Uterus (tissue), 4 donors: ENCODE measurements at regions of chr17 and their contacts with region 1.

Region 1: GRCh38 chr17:20908373-20909273 is 134.2 kb downstream of the USP22 start:
- DNase-seq: peak; percentile 85 to 92
- H3K4me3 ChIP-seq: peak overlapping the region; percentile 16 to 40
- H3K27ac ChIP-seq: peak overlapping the region; percentile 82 to 91
- H3K4me1 ChIP-seq: peaks cover 0 to 4% of the 10 kb centered on the region in 2 donors
- H3K27me3 ChIP-seq: no peaks in the 10 kb centered on the region
- CTCF ChIP-seq: peak; percentile 72 to 89 (median 82)
- POLR2A ChIP-seq: peak; percentile 53 to 71

Region 2: DNA sequence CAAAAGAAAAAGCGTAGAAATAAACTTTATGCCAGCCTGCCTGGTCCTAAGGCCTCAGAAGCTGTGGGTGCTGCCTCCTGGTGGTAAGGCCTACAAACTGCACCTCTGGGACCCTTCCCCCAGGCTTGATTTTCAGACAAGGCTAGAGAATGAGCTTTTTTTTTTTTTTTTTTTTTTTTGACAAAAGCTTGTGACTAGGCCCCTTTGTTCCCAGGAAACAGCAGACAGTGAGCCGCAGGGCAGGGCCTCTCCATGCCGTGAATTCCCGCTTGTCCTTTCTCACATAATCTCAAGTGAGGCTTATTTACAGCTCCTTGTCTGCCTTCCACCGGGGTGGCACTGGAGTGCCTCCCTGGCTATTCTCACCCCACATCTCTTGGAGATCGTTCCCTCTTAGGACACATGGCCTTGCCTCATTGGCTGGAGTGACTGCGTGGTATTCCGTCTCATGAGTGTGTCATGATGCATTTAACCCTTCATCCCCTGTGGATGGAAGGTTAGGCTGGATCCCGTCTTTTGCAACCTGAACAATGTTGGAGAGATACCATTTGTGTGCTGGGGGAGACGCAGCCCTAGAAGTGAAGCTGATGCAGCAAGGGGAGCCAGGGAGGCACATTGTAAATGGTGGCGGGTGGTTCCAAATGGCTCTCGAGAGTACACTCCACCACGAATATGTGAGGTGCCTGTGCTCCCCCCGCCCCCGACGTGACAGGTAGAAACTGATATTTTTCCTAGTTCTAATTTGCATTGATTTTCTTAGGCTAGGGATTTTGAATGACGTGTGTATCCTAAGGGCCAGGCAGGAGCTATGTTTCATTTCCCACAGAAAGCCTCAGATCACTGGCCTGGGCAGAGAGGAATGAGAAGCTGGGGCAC is 84.6 kb after region 1 on chr17:
- intact Hi-C with region 1: loop called (anchors 5 kb)
- DNase-seq: peak; percentile 73 to 77
- H3K4me3 ChIP-seq: peak overlapping the region in 1 of 2 donors; percentile 12
- H3K27ac ChIP-seq: peak overlapping the region in 1 of 2 donors; percentile 46
- H3K4me1 ChIP-seq: peaks cover 0 to 3% of the 10 kb centered on the region in 2 donors
- H3K27me3 ChIP-seq: no peaks in the 10 kb centered on the region
- CTCF ChIP-seq: peak; percentile 82 to 91 (median 86)
- POLR2A ChIP-seq: no peak